CD4-positive, alpha-beta memory T cell (primary cell): ENCODE measurements at regions of chr12 and their contacts with region 1.

Region 1: GRCh38 chr12:115730975-115731541 is 546.4 kb downstream of the MED13L start:
- DNase-seq: no peak
- H3K4me3 ChIP-seq: no peak overlapping the region
- H3K4me3 Mint-ChIP-seq: no peak overlapping the region
- H3K27ac ChIP-seq: no peak overlapping the region
- H3K27ac Mint-ChIP-seq: no peak overlapping the region
- H3K4me1 ChIP-seq: no peaks in the 10 kb centered on the region
- H3K4me1 Mint-ChIP-seq: no peaks in the 10 kb centered on the region
- H3K27me3 ChIP-seq: no peaks in the 10 kb centered on the region
- H3K27me3 Mint-ChIP-seq: no peaks in the 10 kb centered on the region

Region 2: GRCh38 chr12:114826244-114826643 is 904.8 kb before region 1 on chr12:
- CTCF ChIA-PET with region 1: no interaction called
- POLR2A ChIA-PET with region 1: no interaction called
- intact Hi-C with region 1: loop called (anchors 5 kb)
- DNase-seq: no peak
- H3K4me3 ChIP-seq: no peak overlapping the region
- H3K4me3 Mint-ChIP-seq: no peak overlapping the region
- H3K27ac ChIP-seq: no peak overlapping the region
- H3K27ac Mint-ChIP-seq: no peak overlapping the region
- H3K4me1 ChIP-seq: no peaks in the 10 kb centered on the region
- H3K4me1 Mint-ChIP-seq: no peaks in the 10 kb centered on the region
- H3K27me3 ChIP-seq: no peaks in the 10 kb centered on the region
- H3K27me3 Mint-ChIP-seq: no peaks in the 10 kb centered on the region